CD4-positive, alpha-beta memory T cell (primary cell): ENCODE measurements at regions of chr12 and their contacts with region 1.

Region 1: DNA sequence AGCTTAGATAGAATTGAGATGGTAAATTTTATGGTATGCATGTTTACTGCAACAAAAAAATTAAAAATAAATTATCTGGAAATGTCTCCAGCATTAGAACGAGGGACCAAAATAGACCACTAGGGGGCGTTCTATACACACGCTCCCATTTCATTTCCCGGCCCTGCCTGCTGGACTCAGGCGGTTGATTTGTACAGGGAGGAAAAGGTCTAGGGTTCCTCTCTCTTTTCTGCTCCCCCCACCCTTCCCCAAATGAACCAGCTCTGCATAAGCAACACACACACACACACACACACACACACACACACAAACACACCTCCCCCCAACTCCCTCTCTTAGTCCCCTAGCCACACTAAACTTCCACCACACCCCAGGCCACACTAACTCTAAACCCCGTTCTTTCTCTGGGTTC is 7.8 kb upstream of the DTX1 start:
- DNase-seq: peak; percentile 58 to 73 (median 67)
- H3K4me3 ChIP-seq: no peak overlapping the region
- H3K4me3 Mint-ChIP-seq: peak overlapping the region in 1 of 8 donors; percentile 52
- H3K27ac ChIP-seq: no peak overlapping the region
- H3K27ac Mint-ChIP-seq: peak overlapping the region in 3 of 7 donors; percentile 14 to 65 (median 27)
- H3K4me1 ChIP-seq: peaks cover 8% of the 10 kb centered on the region
- H3K4me1 Mint-ChIP-seq: peaks cover 8 to 28% (median 17%) of the 10 kb centered on the region in 4 donors
- H3K27me3 ChIP-seq: no peaks in the 10 kb centered on the region
- H3K27me3 Mint-ChIP-seq: peaks cover under 1 to 1% of the 10 kb centered on the region in 2 donors

Region 2: DNA sequence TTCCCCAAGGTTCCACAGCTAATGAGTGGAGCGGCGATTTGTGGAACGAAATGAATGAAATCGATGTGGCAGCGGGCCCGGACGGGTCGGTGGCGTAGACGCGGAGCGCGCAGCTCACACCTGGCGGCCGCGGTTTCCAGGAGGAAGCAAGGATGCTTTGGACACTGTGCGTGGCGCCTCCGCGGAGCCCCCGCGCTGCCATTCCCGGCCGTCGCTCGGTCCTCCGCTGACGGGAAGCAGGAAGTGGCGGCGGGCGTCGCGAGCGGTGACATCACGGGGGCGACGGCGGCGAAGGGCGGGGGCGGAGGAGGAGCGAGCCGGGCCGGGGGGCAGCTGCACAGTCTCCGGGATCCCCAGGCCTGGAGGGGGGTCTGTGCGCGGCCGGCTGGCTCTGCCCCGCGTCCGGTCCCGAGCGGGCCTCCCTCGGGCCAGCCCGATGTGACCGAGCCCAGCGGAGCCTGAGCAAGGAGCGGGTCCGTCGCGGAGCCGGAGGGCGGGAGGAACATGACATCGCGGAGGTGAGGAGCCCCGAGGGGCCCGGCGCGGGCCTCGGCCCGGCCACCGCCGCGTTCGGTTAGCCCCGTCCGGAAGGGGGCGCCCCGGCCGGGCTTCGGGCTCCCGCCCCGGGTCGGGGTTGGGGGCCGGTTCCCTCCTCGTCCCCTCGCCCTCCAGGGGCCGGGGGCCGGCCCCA is 630.0 kb before region 1 on chr12 and contains the start of gene PTPN11:
- CTCF ChIA-PET with region 1: no interaction called
- POLR2A ChIA-PET with region 1: no interaction called
- intact Hi-C with region 1: no loop called
- DNase-seq: peak; percentile 88 to 94 (median 90)
- H3K4me3 ChIP-seq: peak within 1 kb of the TSS; percentile 93 to 98
- H3K4me3 Mint-ChIP-seq: peak within 1 kb of the TSS; percentile 94 to 99 (median 96)
- H3K27ac ChIP-seq: peak within 1 kb of the TSS; percentile 89
- H3K27ac Mint-ChIP-seq: peak within 1 kb of the TSS; percentile 96 to 100 (median 98)
- H3K4me1 ChIP-seq: peaks cover 52% of the 10 kb centered on the region
- H3K4me1 Mint-ChIP-seq: peaks cover 30 to 52% (median 37%) of the 10 kb centered on the region in 4 donors
- H3K27me3 ChIP-seq: no peaks in the 10 kb centered on the region
- H3K27me3 Mint-ChIP-seq: peaks cover 0 to 3% of the 10 kb centered on the region in 2 donors
- total RNA-seq, gene PTPN11: 45.3 to 47.7 TPM

Region 3: GRCh38 chr12:112725391-112725790 is 323.3 kb before region 1 on chr12:
- CTCF ChIA-PET with region 1: no interaction called
- POLR2A ChIA-PET with region 1: no interaction called
- intact Hi-C with region 1: no loop called
- DNase-seq: no peak
- H3K4me3 ChIP-seq: no peak overlapping the region
- H3K4me3 Mint-ChIP-seq: no peak overlapping the region
- H3K27ac ChIP-seq: no peak overlapping the region
- H3K27ac Mint-ChIP-seq: no peak overlapping the region
- H3K4me1 ChIP-seq: no peaks in the 10 kb centered on the region
- H3K4me1 Mint-ChIP-seq: peaks cover 0 to 1% (median 0%) of the 10 kb centered on the region in 4 donors
- H3K27me3 ChIP-seq: no peaks in the 10 kb centered on the region
- H3K27me3 Mint-ChIP-seq: peaks cover 8 to 17% of the 10 kb centered on the region in 2 donors

Region 4: DNA sequence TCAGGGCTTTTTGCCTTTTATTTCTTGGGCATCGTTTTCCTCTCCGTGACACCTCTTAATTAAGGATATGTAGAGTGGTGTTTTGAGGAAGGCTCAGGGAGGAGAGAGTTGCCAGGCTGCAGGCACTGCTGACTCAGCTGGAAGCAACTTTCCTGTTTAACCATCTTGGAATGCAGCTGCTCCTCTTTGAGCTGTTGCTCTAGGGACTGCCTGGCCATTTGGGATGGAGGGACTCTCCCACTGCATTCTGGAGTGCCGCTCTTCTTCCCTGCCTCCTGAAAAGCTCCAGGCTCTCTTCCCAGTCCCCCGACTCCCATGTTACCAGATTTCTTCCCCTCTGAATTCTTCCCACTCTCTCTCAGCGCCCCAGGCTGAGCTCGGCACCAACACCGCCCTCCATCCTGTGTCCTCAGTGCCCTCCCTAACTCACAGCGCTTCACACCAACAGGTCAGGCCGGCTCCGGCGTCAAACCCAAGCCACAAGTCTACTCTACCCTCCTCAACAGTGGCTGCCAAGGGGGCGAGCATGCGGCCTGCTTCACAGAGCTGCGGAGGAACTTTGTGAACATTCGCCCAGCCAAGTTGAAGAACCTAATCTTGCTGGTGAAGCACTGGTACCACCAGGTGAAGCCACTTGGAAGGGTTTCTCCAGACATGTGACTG is 104.6 kb before region 1 on chr12:
- CTCF ChIA-PET with region 1: no interaction called
- POLR2A ChIA-PET with region 1: no interaction called
- intact Hi-C with region 1: no loop called
- DNase-seq: no peak
- H3K4me3 ChIP-seq: no peak overlapping the region
- H3K4me3 Mint-ChIP-seq: peak overlapping the region in 1 of 8 donors; percentile 22
- H3K27ac ChIP-seq: no peak overlapping the region
- H3K27ac Mint-ChIP-seq: peak overlapping the region in 1 of 7 donors; percentile 61
- H3K4me1 ChIP-seq: peaks cover 19% of the 10 kb centered on the region
- H3K4me1 Mint-ChIP-seq: peaks cover 11 to 20% (median 18%) of the 10 kb centered on the region in 4 donors
- H3K27me3 ChIP-seq: no peaks in the 10 kb centered on the region
- H3K27me3 Mint-ChIP-seq: no peaks in the 10 kb centered on the region

Region 5: DNA sequence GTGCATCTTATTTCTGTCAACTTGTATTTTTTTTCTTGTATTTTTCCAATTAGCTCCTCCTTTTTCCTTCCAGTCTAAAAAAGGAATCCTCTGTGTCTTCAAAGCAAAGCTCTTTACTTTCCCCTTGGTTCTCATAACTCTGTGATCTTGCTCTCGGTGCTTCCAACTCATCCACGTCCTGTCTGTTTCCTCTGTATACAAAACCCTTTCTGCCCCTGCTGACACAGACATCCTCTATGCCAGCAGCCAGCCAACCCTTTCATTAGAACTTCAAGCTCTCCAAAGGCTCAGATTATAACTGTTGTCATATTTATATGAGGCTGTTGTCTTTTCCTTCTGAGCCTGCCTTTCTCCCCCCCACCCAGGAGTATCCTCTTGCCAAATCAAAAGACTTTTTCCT is 38.0 kb before region 1 on chr12:
- CTCF ChIA-PET with region 1: no interaction called
- POLR2A ChIA-PET with region 1: no interaction called
- intact Hi-C with region 1: no loop called
- DNase-seq: no peak
- H3K4me3 ChIP-seq: no peak overlapping the region
- H3K4me3 Mint-ChIP-seq: no peak overlapping the region
- H3K27ac ChIP-seq: no peak overlapping the region
- H3K27ac Mint-ChIP-seq: peak overlapping the region in 1 of 7 donors; percentile 32
- H3K4me1 ChIP-seq: no peaks in the 10 kb centered on the region
- H3K4me1 Mint-ChIP-seq: peaks cover 0 to 2% (median under 1%) of the 10 kb centered on the region in 4 donors
- H3K27me3 ChIP-seq: no peaks in the 10 kb centered on the region
- H3K27me3 Mint-ChIP-seq: no peaks in the 10 kb centered on the region

Region 6: GRCh38 chr12:113071135-113072112 is 22.7 kb after region 1 on chr12:
- CTCF ChIA-PET with region 1: interaction called, 11 read pairs
- POLR2A ChIA-PET with region 1: no interaction called
- intact Hi-C with region 1: no loop called
- DNase-seq: no peak
- H3K4me3 ChIP-seq: no peak overlapping the region
- H3K4me3 Mint-ChIP-seq: peak overlapping the region in 2 of 8 donors; percentile 10 to 43
- H3K27ac ChIP-seq: no peak overlapping the region
- H3K27ac Mint-ChIP-seq: peak overlapping the region in 6 of 7 donors; percentile 1 to 91 (median 79)
- H3K4me1 ChIP-seq: peaks cover 36% of the 10 kb centered on the region
- H3K4me1 Mint-ChIP-seq: peaks cover 46 to 83% (median 62%) of the 10 kb centered on the region in 4 donors
- H3K27me3 ChIP-seq: no peaks in the 10 kb centered on the region
- H3K27me3 Mint-ChIP-seq: no peaks in the 10 kb centered on the region

Region 7: GRCh38 chr12:113098446-113098896 is 49.7 kb after region 1 on chr12:
- CTCF ChIA-PET with region 1: interaction called, 139 read pairs
- POLR2A ChIA-PET with region 1: interaction called, 3 read pairs
- intact Hi-C with region 1: loop called (anchors 1 kb)
- DNase-seq: peak; percentile 52 to 68 (median 60)
- H3K4me3 ChIP-seq: no peak overlapping the region
- H3K4me3 Mint-ChIP-seq: peak overlapping the region in 1 of 8 donors; percentile 4
- H3K27ac ChIP-seq: no peak overlapping the region
- H3K27ac Mint-ChIP-seq: peak overlapping the region in 4 of 7 donors; percentile 64 to 85 (median 75)
- H3K4me1 ChIP-seq: peaks cover 13% of the 10 kb centered on the region
- H3K4me1 Mint-ChIP-seq: peaks cover 14 to 41% (median 20%) of the 10 kb centered on the region in 4 donors
- H3K27me3 ChIP-seq: no peaks in the 10 kb centered on the region
- H3K27me3 Mint-ChIP-seq: peaks cover 0 to 1% of the 10 kb centered on the region in 2 donors

Region 8: GRCh38 chr12:113152835-113153814 is 104.4 kb after region 1 on chr12:
- CTCF ChIA-PET with region 1: interaction called, 24 read pairs
- POLR2A ChIA-PET with region 1: no interaction called
- intact Hi-C with region 1: loop called (anchors 1 kb)
- DNase-seq: peak; percentile 70 to 85 (median 74)
- H3K4me3 ChIP-seq: peak overlapping the region in 1 of 2 donors; percentile 57
- H3K4me3 Mint-ChIP-seq: peak overlapping the region; percentile 73 to 87 (median 85)
- H3K27ac ChIP-seq: peak overlapping the region; percentile 30
- H3K27ac Mint-ChIP-seq: peak overlapping the region in 6 of 7 donors; percentile 9 to 86 (median 75)
- H3K4me1 ChIP-seq: peaks cover 20% of the 10 kb centered on the region
- H3K4me1 Mint-ChIP-seq: peaks cover 9 to 29% (median 13%) of the 10 kb centered on the region in 4 donors
- H3K27me3 ChIP-seq: peaks cover 6% of the 10 kb centered on the region
- H3K27me3 Mint-ChIP-seq: peaks cover 0 to 9% of the 10 kb centered on the region in 2 donors

Region 9: GRCh38 chr12:113310489-113310888 is 261.8 kb after region 1 on chr12:
- CTCF ChIA-PET with region 1: no interaction called
- POLR2A ChIA-PET with region 1: no interaction called
- intact Hi-C with region 1: loop called (anchors 5 kb)
- DNase-seq: no peak
- H3K4me3 ChIP-seq: no peak overlapping the region
- H3K4me3 Mint-ChIP-seq: no peak overlapping the region
- H3K27ac ChIP-seq: no peak overlapping the region
- H3K27ac Mint-ChIP-seq: peak overlapping the region in 4 of 7 donors; percentile 27 to 67 (median 54)
- H3K4me1 ChIP-seq: no peaks in the 10 kb centered on the region
- H3K4me1 Mint-ChIP-seq: peaks cover 0 to 2% (median 0%) of the 10 kb centered on the region in 4 donors
- H3K27me3 ChIP-seq: no peaks in the 10 kb centered on the region
- H3K27me3 Mint-ChIP-seq: no peaks in the 10 kb centered on the region